H1 (cell line): ENCODE measurements at regions of chr18 and their contacts with region 1.

Region 1: GRCh38 chr18:46688853-46689525 is 32.0 kb upstream of the LOXHD1 start:
- DNase-seq: no peak
- H3K4me3 ChIP-seq: no peak overlapping the region
- H3K27ac ChIP-seq: no peak overlapping the region
- H3K4me1 ChIP-seq: peaks cover 0 to 10% (median 2%) of the 10 kb centered on the region in 4 experiments; a peak in 5 of 7 replicates
- H3K27me3 ChIP-seq: no peaks in the 10 kb centered on the region
- CTCF ChIP-seq: no peak
- EP300 ChIP-seq: no peak
- POLR2A ChIP-seq: no peak
- RAD21 ChIP-seq: no peak

Region 2: GRCh38 chr18:46677611-46678010 is 11.4 kb before region 1 on chr18:
- CTCF ChIA-PET with region 1: interaction called, 18 read pairs
- POLR2A ChIA-PET with region 1: no interaction called
- DNase-seq: no peak
- H3K4me3 ChIP-seq: no peak overlapping the region
- H3K27ac ChIP-seq: no peak overlapping the region
- H3K4me1 ChIP-seq: peaks cover 0 to 6% (median 2%) of the 10 kb centered on the region in 4 experiments; a peak in 4 of 7 replicates
- H3K27me3 ChIP-seq: no peaks in the 10 kb centered on the region
- CTCF ChIP-seq: peak in 2 of 3 experiments; percentile 31 to 34; a peak in 2 of 4 replicates
- EP300 ChIP-seq: no peak
- POLR2A ChIP-seq: no peak
- RAD21 ChIP-seq: peak; percentile 43 to 53; a peak in 3 of 4 replicates

Region 3: DNA sequence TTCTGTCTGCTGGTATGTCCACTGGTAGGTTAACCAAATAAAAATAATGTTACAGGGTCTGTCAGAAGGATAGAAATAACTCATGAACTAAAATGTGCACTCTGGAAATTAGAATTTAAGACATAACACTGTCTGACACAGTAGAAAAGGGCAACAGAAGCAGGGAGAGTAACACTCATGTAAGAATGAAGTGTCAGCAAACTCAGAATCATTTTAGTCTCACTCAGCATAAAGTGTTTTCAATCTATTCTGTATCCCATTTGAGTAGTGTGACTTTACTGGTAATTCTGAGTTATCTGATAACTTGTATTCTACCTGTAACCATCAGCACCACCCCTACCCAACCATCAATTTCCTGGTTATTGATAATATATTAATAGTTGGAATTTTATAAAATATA is 160.0 kb after region 1 on chr18:
- CTCF ChIA-PET with region 1: no interaction called
- POLR2A ChIA-PET with region 1: no interaction called
- DNase-seq: no peak
- H3K4me3 ChIP-seq: no peak overlapping the region
- H3K27ac ChIP-seq: no peak overlapping the region
- H3K4me1 ChIP-seq: no peaks in the 10 kb centered on the region
- H3K27me3 ChIP-seq: no peaks in the 10 kb centered on the region
- CTCF ChIP-seq: no peak
- EP300 ChIP-seq: no peak
- POLR2A ChIP-seq: no peak
- RAD21 ChIP-seq: no peak